Left cardiac atrium (tissue), 4 donors: ENCODE measurements at regions of chr10 and their contacts with region 1.

Region 1: GRCh38 chr10:63629363-63630084 is 108.3 kb downstream of the REEP3 start:
- DNase-seq: peak; percentile 97
- ATAC-seq: peak; percentile 76 to 84

Region 2: GRCh38 chr10:63166742-63167258 is 462.7 kb before region 1 on chr10:
- intact Hi-C with region 1: loop called in 1 of 2 experiments (anchors 2 kb)
- DNase-seq: no peak
- ATAC-seq: peak; percentile 62 to 70

Region 3: GRCh38 chr10:63217120-63217605 is 412.4 kb before region 1 on chr10:
- intact Hi-C with region 1: loop called in 1 of 2 experiments (anchors 2 kb)
- DNase-seq: no peak
- ATAC-seq: peak; percentile 78 to 84

Region 4: GRCh38 chr10:63268798-63269503 is 360.6 kb before region 1 on chr10:
- intact Hi-C with region 1: loop called in 1 of 2 experiments (anchors 5 kb)
- DNase-seq: peak; percentile 83
- ATAC-seq: peak; percentile 96 to 98

Region 5: DNA sequence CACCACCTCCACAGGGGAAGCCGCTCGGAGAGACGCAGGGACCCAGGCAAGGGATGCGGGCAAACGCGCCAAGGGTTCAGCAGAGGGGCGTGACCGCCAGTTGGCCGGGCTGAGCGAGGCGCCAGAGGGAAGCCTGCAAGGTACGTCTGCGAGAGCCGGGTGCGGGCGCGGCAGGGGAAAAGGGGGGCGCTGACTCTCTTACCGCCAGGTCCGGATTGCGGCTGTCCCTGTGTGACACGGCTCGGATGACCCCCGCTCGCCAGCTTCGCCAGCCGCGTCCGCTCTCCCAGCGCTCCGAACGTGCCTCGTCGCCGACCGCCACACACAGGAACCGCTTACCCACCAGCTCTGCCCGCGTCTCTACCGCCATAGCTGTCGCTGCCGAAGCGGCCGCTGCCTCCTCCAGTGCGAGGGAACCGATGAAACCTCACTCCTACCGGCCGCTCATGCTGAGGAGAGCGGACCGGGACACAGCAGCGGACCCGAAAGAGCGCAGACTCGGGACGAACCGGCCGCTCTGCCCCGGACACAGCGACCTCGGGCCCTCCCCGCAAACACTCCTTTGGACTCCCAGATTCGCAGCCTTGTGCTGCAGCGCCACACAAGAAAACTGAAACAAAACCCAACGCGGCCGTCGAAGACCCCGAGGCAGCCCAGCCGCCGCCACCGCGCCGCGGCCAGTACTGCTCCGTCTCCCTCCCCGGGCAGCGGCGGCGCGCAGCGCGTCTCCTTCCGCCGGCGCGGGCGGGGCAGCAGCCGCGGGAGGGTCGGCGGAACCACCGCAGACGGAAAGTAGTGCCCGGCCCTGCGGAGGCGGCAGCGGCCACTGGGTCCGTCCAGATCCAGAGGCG is 164.0 kb before region 1 on chr10 and contains the start of gene JMJD1C:
- intact Hi-C with region 1: loop called in 1 of 2 experiments (anchors 10 kb)
- DNase-seq: peak; percentile 85
- ATAC-seq: peak; percentile 92 to 95
- total RNA-seq, gene JMJD1C: 40.9 to 44.3 TPM

Region 6: DNA sequence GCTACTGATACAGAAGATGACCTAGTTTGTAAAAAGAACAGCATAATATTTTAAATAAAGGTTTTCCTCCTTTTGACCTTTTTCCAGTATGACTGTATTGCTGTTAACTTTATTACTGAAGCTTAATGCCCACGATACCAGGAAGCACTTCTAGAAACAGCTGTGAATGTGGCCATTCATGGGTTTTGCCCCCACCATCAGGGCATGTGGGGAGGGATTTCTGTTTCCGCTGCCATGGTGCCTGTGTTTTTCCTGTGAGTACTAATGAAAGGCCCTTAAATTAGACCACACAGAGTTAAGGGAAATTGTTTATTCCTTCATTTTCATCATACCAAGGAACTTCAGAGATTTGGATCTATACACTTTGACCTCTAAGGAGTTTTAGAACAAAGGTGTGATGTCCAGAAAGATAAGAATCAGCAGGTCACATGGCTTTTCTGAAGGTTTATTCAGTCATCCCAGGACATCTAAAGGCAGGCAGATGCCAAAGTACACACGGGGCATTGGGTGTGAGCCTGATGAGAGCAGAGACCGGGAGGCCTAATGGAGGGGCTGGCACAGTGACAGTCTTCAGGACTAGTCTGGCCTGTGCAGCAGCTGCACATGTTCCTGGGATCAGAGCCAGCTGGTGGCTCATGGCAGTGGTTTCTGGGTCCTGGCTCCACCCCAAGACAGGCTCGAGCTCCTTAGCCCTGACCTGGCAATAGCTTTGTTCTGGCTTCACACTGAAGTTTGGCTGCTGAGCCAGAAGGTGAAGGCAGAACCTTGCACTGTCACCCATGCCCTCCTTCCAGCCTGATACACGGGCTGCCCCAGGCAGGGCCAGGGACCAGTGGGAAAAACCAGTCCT is 82.6 kb after region 1 on chr10:
- intact Hi-C with region 1: loop called in 1 of 2 experiments (anchors 1 kb)
- DNase-seq: peak; percentile 96
- ATAC-seq: peak; percentile 93